ENCODE measurements at regions of chr12 and their contacts with region 1.

Region 1: DNA sequence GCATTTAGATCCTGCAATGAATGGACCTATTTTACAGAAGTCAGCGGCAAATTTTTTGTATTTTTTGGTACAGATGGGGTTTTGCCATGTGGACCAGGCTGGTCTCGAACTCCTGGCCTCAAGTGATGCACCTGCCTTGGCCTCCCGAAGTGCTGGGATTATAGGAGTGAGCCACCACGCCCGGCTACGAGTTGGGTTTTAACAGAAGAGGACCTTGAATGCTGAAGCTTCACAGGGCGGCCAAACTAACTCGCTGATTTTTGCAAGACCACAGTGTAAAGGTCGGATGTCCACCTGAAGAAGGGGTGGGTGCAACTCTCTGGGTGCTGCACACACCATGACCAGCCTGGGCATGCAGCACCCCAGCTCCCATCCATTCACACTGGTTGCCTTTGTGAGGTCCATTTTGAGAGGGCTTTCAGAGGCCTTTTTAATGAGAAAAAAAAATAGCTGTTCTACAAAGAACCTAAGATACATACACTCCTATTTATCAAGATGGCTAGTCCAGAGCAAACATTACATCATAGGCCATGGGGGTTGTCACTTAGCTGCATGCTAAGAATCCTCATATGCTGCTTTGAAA is 21.6 kb upstream of the CDK2AP1 start:
- DNase-seq: no peak
- ATAC-seq: no peak
- H3K4me3 ChIP-seq: no peak overlapping the region
- H3K27ac ChIP-seq: no peak overlapping the region
- H3K4me1 ChIP-seq: 0 out of 4 replicates have a peak, but pooled peaks cover 0 to 2% of the 10 kb centered on the region in 2 experiments
- H3K27me3 ChIP-seq: no peaks in the 10 kb centered on the region
- CTCF ChIP-seq: no peak
- POLR2A ChIP-seq: no peak
- RAD21 ChIP-seq: no peak

Region 2: DNA sequence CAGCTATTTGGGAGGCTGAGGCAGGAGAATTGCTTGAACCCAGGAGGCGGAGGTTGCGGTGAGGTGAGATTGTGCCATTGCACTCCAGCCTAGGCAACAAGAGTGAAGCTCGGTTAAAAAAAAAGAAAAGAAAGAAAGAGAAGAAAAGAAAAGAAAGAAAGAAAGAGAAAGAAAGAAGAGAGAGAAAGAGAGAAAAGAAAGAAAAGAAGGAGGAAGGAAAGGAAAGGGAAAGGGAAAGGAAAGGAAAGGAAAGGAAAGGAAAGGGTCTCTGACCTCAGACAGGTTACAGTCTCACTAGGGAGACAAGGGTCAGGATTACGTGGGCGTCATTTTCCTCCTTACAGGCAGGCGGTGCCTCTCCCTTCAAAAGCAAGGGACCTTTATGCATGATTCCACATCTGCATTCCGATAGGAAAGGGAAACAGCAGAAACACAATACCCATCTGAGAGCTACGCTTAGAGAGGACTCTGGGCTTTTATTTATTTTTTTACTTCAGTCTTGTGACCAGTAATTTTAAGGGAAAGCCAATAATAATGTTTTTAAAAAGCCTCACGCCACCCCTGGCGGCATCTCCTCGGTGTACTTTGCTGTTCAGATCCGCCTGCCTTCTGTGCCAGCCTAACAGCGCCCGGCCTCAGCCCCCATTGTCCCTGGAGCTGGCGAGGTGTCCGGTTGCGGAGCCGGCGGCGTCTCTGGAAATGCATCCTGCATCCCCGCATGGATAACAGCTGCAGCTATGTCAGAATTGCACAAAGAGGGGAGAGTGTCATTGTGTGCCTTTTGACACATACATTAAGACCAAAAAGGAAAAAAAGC is 459.0 kb before region 1 on chr12:
- CTCF ChIA-PET with region 1: no interaction called
- POLR2A ChIA-PET with region 1: no interaction called
- RAD21 ChIA-PET with region 1: no interaction called
- intact Hi-C with region 1: no loop called
- DNase-seq: peak; percentile 35
- ATAC-seq: peak; percentile 59
- H3K4me3 ChIP-seq: peak overlapping the region; percentile 49 to 71
- H3K27ac ChIP-seq: peak overlapping the region; percentile 38
- H3K4me1 ChIP-seq: peaks cover 32 to 48% of the 10 kb centered on the region in 2 experiments
- H3K27me3 ChIP-seq: no peaks in the 10 kb centered on the region
- CTCF ChIP-seq: no peak
- POLR2A ChIP-seq: no peak
- RAD21 ChIP-seq: no peak

Region 3: DNA sequence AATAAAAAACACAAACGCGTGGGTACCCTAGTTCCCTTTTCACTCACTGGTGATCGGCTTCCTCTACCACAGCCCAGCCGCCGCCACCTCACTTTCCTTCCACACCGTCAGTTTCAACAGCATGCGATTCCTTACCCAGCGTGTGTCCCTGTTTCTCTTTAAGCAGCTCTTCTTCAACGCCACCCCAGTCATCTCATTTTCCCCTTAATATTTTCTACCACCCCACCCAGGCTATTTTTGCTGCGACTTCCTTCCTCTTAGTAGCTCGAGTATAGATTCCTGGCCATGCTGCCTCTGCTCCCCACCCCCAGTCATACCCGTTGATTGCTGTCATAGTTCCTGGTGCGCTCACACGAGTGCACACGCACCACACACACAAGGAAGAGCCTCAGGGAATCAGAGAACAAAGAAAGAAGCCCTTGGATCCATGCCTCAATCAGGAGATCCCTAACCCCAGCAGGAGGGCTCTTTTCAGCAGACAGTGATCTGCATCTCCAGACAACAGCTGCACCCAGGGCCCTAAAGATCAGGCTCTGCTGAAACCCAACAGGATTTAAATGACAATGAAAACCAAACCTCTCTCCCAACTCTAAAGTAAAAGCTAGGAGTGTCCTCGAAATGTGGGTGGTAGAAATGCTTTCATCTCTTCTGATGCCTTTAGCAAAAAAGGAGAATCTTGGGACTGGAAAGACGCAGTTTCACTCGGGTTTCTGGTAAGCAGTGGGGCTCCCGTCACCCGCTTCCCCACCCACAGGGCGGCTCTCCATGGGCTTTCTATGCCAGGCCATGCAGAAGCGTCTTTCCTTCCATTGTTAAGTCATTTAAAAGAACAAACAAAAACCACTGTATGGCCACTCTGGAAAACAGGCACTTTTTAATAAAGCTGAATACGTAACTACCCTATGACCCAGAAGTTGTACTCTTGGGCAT is 421.2 kb before region 1 on chr12:
- CTCF ChIA-PET with region 1: no interaction called
- POLR2A ChIA-PET with region 1: no interaction called
- RAD21 ChIA-PET with region 1: no interaction called
- intact Hi-C with region 1: no loop called
- DNase-seq: no peak
- ATAC-seq: no peak
- H3K4me3 ChIP-seq: no peak overlapping the region
- H3K27ac ChIP-seq: no peak overlapping the region
- H3K4me1 ChIP-seq: peaks cover 2 to 16% of the 10 kb centered on the region in 2 experiments; a peak in 3 of 4 replicates
- H3K27me3 ChIP-seq: no peaks in the 10 kb centered on the region
- CTCF ChIP-seq: no peak
- POLR2A ChIP-seq: no peak
- RAD21 ChIP-seq: no peak

Region 4: DNA sequence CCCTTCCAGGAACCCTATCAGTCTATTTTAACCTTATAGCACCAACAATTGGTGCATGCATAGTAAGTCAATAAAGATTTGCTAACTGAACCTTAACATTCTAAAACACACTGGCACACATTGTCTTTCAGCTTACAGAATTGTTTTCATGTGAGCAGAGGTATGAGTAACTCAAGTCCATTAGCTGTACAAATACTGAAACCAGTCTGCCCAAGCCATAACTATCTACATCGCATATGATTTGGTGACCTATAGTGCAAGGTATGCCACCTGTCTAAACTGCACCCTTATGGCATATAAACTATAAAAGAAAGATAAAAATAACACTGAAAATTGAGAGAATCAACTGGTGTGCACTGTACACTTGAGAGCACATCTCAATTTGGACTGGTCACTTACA is 36.5 kb after region 1 on chr12:
- CTCF ChIA-PET with region 1: no interaction called
- POLR2A ChIA-PET with region 1: no interaction called
- RAD21 ChIA-PET with region 1: no interaction called
- intact Hi-C with region 1: loop called (anchors 5 kb)
- DNase-seq: no peak
- ATAC-seq: no peak
- H3K4me3 ChIP-seq: no peak overlapping the region
- H3K27ac ChIP-seq: no peak overlapping the region
- H3K4me1 ChIP-seq: no peaks in the 10 kb centered on the region
- H3K27me3 ChIP-seq: no peaks in the 10 kb centered on the region
- CTCF ChIP-seq: no peak
- POLR2A ChIP-seq: no peak
- RAD21 ChIP-seq: no peak